Prostate gland (tissue), 2 donors: ENCODE measurements at regions of chr5 and their contacts with region 1.

Region 1: DNA sequence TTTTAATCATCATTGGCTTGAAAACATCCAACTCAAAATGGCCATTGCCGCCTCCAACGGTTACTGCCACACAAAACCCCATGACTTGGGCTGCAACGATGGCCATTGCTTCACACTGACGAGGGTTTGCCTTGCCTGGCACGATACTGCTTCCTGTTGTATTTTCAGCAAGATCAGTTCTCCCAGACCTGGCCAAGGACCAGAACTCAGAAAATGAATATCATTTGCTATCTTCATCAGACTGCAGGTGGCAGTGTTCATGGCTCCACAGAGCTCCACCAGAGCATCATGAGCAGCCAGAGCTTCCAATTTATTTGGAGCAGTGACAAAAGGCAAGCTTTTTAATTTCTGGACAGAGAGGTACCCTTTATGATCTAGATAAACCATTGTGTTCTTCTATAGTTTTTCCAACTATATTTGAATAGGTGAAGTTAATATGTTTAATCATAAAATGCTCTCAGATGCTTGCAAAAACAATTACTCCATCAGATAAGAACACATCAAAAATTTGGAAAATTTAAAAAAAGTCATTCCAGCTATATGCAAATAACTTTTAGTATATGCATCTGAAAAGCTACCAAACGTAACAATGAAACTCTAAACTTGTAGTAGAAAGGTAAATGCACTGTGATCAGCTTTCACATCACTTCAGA is 10.4 kb downstream of the AMACR start:
- DNase-seq: peak; percentile 77
- H3K4me3 ChIP-seq: no peak overlapping the region
- H3K27ac ChIP-seq: no peak overlapping the region
- H3K4me1 ChIP-seq: no peaks in the 10 kb centered on the region
- H3K27me3 ChIP-seq: no peaks in the 10 kb centered on the region
- CTCF ChIP-seq: peak in 3 of 4 experiments; percentile 54 to 66 (median 64)
- POLR2A ChIP-seq: no peak

Region 2: DNA sequence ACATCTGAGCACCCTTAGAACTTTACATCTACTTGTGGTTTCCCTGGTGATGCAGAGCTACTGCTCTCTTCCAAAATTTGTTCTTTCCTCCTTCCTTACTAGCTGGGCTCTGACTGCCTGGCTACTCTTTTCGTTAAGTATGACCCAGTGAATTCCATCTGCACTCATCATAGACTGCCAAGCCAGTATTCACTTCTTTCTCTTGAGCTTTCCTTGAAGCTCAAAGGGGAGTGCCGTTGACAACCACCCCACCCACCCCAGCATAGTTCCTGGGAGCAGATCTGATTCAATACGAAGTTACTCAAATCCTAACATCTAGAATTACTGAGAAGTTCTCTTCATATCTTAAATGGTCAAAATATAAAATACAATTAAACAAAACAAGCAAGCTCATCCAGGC is 296.2 kb before region 1 on chr5:
- intact Hi-C with region 1: no loop called
- DNase-seq: no peak
- H3K4me3 ChIP-seq: no peak overlapping the region
- H3K27ac ChIP-seq: no peak overlapping the region
- H3K4me1 ChIP-seq: no peaks in the 10 kb centered on the region
- H3K27me3 ChIP-seq: no peaks in the 10 kb centered on the region
- CTCF ChIP-seq: no peak
- POLR2A ChIP-seq: no peak

Region 3: GRCh38 chr5:33944543-33945132 is 52.8 kb before region 1 on chr5:
- intact Hi-C with region 1: no loop called
- DNase-seq: no peak
- H3K4me3 ChIP-seq: no peak overlapping the region
- H3K27ac ChIP-seq: no peak overlapping the region
- H3K4me1 ChIP-seq: no peaks in the 10 kb centered on the region
- H3K27me3 ChIP-seq: no peaks in the 10 kb centered on the region
- CTCF ChIP-seq: no peak
- POLR2A ChIP-seq: no peak

Region 4: GRCh38 chr5:34459908-34460307 is 462.5 kb after region 1 on chr5:
- intact Hi-C with region 1: loop called (anchors 2 kb)
- DNase-seq: no peak
- H3K4me3 ChIP-seq: no peak overlapping the region
- H3K27ac ChIP-seq: no peak overlapping the region
- H3K4me1 ChIP-seq: no peaks in the 10 kb centered on the region
- H3K27me3 ChIP-seq: no peaks in the 10 kb centered on the region
- CTCF ChIP-seq: no peak
- POLR2A ChIP-seq: no peak

Region 5: GRCh38 chr5:34929150-34929719 is 931.8 kb after region 1 on chr5 and contains the start of gene DNAJC21:
- intact Hi-C with region 1: loop called (anchors 5 kb)
- DNase-seq: peak; percentile 96
- H3K4me3 ChIP-seq: peak within 1 kb of the TSS; percentile 81 to 82
- H3K27ac ChIP-seq: peak within 1 kb of the TSS; percentile 91 to 92
- H3K4me1 ChIP-seq: peaks cover 10% of the 10 kb centered on the region
- H3K27me3 ChIP-seq: no peaks in the 10 kb centered on the region
- CTCF ChIP-seq: no peak
- POLR2A ChIP-seq: no peak
- total RNA-seq, gene DNAJC21: 30.6 to 36.5 TPM